Adrenal gland (tissue), 19 donors: ENCODE measurements at regions of chr5 and their contacts with region 1.

Region 1: GRCh38 chr5:32709781-32710549 is 1.2 kb upstream of the NPR3 start:
- DNase-seq: peak; percentile 74 to 84 (median 77)
- H3K4me3 ChIP-seq: peak overlapping the region; percentile 16 to 69 (median 51)
- H3K27ac ChIP-seq: peak overlapping the region in 4 of 5 donors; percentile 48 to 91 (median 76)
- H3K4me1 ChIP-seq: peaks cover 14 to 26% of the 10 kb centered on the region in 2 donors
- H3K27me3 ChIP-seq: peaks cover 9% of the 10 kb centered on the region
- CTCF ChIP-seq: peak; percentile 60 to 75 (median 66)
- POLR2A ChIP-seq: peak in 1 of 2 donors; percentile 57

Region 2: DNA sequence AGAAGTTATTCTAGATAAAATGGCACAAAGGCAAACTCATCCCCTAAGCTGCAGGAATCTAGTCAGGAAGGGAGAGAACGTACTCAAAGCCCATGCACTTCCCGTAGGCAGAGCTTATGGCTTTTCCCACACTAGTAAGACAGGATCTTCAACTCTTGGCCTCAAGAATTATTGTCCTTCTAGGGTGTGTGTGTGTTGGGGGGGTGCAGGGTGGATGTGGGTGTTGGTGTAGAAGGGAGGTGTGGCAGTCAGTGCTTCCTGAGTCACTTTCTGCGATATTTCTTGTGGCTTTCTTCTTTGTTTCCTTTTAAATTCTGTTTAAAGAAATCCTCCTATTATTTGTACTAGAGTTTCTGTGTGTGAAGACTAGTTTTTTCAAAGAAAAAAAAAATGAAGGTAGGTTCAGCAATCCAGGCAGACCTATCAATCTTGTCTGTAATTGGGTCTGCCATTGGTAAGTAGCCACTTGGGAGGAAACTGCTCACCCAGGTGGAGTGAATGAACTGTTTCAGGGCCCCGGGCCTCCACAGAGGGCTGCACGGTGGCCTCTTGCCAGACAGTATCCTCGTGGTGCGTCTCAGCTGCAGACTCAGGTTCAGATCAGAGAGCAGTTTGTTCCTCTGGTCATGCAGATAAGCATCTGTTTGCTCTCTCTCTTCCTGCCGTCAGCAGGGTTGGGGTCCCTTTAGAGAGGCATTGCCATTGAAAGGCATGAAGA is 133.0 kb after region 1 on chr5:
- intact Hi-C with region 1: loop called (anchors 10 kb)
- DNase-seq: no peak
- H3K4me3 ChIP-seq: no peak overlapping the region
- H3K27ac ChIP-seq: no peak overlapping the region
- H3K4me1 ChIP-seq: no peaks in the 10 kb centered on the region
- H3K27me3 ChIP-seq: no peaks in the 10 kb centered on the region
- CTCF ChIP-seq: no peak
- POLR2A ChIP-seq: no peak

Region 3: DNA sequence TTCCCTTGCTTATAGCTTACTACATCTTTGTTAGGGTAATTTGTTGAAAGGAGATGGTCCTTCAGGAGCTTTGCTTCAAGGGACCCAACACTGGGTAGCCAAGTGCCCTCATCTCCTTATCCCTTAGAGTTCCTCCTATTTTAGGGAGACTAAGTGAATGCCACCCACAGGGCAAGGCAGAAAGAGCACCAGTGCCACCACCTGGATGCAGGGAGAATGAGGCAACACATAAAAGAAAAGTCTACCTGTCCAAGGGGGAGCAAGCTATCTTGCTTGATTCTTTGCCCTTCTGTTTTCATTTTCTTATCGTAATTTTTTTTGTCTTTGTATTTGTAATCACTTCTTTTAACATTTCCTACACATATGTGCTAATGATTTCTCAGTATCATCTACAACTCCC is 206.7 kb after region 1 on chr5:
- intact Hi-C with region 1: loop called in 1 of 2 experiments (anchors 10 kb)
- DNase-seq: peak in 6 of 7 donors; percentile 18 to 41 (median 26)
- H3K4me3 ChIP-seq: no peak overlapping the region
- H3K27ac ChIP-seq: no peak overlapping the region
- H3K4me1 ChIP-seq: no peaks in the 10 kb centered on the region
- H3K27me3 ChIP-seq: no peaks in the 10 kb centered on the region
- CTCF ChIP-seq: peak; percentile 21 to 49 (median 42)
- POLR2A ChIP-seq: no peak

Region 4: DNA sequence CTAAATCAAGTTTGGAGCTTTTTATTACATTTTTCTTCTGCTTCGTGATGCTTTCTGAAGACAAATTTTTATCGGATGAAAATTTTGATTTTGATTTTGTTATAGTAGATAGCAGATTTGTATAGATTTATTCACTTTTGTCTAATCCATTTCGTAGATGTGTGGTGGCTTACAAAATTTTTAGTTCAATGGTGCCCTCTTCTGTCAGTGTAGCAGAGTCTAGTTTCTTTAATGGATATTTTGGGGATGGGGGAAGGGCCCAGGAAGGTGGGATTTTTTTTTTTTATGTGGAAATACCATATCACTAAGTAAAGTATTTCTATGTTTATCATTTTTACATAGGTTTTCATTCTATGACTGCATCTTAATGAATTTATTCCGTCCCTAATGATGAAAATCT is 470.9 kb after region 1 on chr5:
- intact Hi-C with region 1: loop called in 1 of 2 experiments (anchors 10 kb)
- DNase-seq: no peak
- H3K4me3 ChIP-seq: no peak overlapping the region
- H3K27ac ChIP-seq: no peak overlapping the region
- H3K4me1 ChIP-seq: no peaks in the 10 kb centered on the region
- H3K27me3 ChIP-seq: no peaks in the 10 kb centered on the region
- CTCF ChIP-seq: peak in 5 of 6 experiments; percentile 15 to 48 (median 46)
- POLR2A ChIP-seq: no peak

Region 5: DNA sequence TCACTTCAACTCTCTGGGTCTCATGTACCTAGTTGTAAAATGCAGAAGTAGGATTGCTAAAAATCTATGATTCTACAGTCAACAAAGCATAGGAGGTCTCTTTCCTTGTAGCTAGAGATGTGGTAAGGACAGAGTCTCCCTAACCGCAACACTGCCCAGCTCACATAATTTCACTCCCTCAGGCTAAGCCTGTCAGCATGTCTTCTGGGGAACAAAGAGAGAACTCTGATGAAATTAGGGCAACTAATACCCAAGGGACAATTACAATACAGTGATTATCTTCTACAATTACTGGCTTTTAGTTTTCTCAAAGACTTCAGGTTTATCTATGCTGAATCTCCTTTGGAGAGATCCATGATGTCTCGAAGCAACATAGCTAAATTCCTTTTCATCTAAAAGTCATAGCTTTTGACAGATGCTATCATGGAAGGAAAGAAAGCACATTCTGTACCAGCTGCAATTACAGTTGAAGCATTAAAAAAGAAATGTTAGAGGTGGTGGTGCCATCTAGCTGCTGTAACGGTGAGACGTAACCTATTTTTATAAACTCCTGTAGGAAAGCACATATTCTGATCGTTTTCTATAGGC is 589.8 kb after region 1 on chr5:
- intact Hi-C with region 1: loop called in 1 of 2 experiments (anchors 5 kb)
- DNase-seq: peak in 4 of 7 donors; percentile 25 to 58 (median 28)
- H3K4me3 ChIP-seq: peak overlapping the region in 1 of 4 donors; percentile 16
- H3K27ac ChIP-seq: peak overlapping the region in 2 of 5 donors; percentile 6 to 21
- H3K4me1 ChIP-seq: peaks cover 0 to 17% of the 10 kb centered on the region in 2 donors
- H3K27me3 ChIP-seq: no peaks in the 10 kb centered on the region
- CTCF ChIP-seq: peak in 5 of 6 experiments; percentile 50 to 69 (median 56)
- POLR2A ChIP-seq: no peak

Region 6: DNA sequence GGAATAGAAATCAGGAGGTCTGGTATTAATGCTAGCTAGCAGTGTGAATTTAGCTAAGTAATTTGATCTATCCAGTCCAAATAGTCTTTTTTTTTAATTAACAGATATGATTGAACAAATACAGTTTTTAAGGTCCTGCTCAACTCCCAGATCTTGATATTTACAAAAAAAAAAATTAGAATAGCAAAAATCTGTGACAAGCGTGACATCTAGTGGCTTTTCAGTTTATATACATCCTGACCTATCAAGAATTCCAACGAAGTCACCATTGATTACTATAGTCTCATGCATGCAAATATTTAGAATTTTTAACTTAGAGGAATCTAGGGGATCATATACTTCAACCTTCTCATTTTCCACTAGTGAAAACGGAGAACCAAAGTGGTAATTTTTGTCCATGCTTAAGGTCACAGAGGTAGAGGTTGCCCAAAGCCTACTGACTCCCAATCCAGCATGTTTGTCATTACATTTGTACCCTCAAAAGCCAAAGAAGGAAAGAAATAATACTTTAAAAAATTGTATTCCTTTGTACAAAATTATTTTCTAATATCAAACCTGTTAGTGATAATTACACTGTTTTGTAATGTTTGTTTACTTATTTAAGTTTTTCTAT is 713.2 kb after region 1 on chr5:
- intact Hi-C with region 1: loop called (anchors 10 kb)
- DNase-seq: no peak
- H3K4me3 ChIP-seq: no peak overlapping the region
- H3K27ac ChIP-seq: no peak overlapping the region
- H3K4me1 ChIP-seq: no peaks in the 10 kb centered on the region
- H3K27me3 ChIP-seq: no peaks in the 10 kb centered on the region
- CTCF ChIP-seq: peak; percentile 17 to 61 (median 48)
- POLR2A ChIP-seq: no peak